CD4-positive, alpha-beta memory T cell (primary cell): ENCODE measurements at regions of chr20 and their contacts with region 1.

Region 1: GRCh38 chr20:1118336-1119127 is at the start of gene PSMF1:
- DNase-seq: peak; percentile 95 to 98 (median 96)
- H3K4me3 ChIP-seq: peak within 1 kb of the TSS; percentile 85 to 99
- H3K4me3 Mint-ChIP-seq: peak within 1 kb of the TSS; percentile 91 to 97 (median 95)
- H3K27ac ChIP-seq: peak within 1 kb of the TSS; percentile 78
- H3K27ac Mint-ChIP-seq: peak within 1 kb of the TSS; percentile 91 to 97 (median 95)
- H3K4me1 ChIP-seq: peaks cover 52% of the 10 kb centered on the region
- H3K4me1 Mint-ChIP-seq: peaks cover 47 to 70% (median 58%) of the 10 kb centered on the region in 4 donors
- H3K27me3 ChIP-seq: no peaks in the 10 kb centered on the region
- H3K27me3 Mint-ChIP-seq: no peaks in the 10 kb centered on the region
- total RNA-seq, gene PSMF1: 118 to 123 TPM

Region 2: GRCh38 chr20:1108437-1108920 is 10.1 kb before region 1 on chr20:
- CTCF ChIA-PET with region 1: interaction called, 17 read pairs
- POLR2A ChIA-PET with region 1: interaction called, 4 read pairs
- intact Hi-C with region 1: no loop called
- DNase-seq: peak; percentile 29 to 39 (median 35)
- H3K4me3 ChIP-seq: no peak overlapping the region
- H3K4me3 Mint-ChIP-seq: no peak overlapping the region
- H3K27ac ChIP-seq: no peak overlapping the region
- H3K27ac Mint-ChIP-seq: no peak overlapping the region
- H3K4me1 ChIP-seq: no peaks in the 10 kb centered on the region
- H3K4me1 Mint-ChIP-seq: peaks cover 0 to 11% (median 4%) of the 10 kb centered on the region in 4 donors
- H3K27me3 ChIP-seq: no peaks in the 10 kb centered on the region
- H3K27me3 Mint-ChIP-seq: peaks cover 0 to 1% of the 10 kb centered on the region in 2 donors

Region 3: GRCh38 chr20:1225783-1226654 is 107.5 kb after region 1 on chr20 and contains the start of gene RAD21L1:
- CTCF ChIA-PET with region 1: no interaction called
- POLR2A ChIA-PET with region 1: interaction called, 3 read pairs
- intact Hi-C with region 1: loop called (anchors 1 kb)
- DNase-seq: peak; percentile 52 to 81 (median 60)
- H3K4me3 ChIP-seq: peak within 1 kb of the TSS; percentile 44 to 59
- H3K4me3 Mint-ChIP-seq: peak within 1 kb of the TSS; percentile 82 to 91 (median 87)
- H3K27ac ChIP-seq: peak within 1 kb of the TSS; percentile 25
- H3K27ac Mint-ChIP-seq: peak within 1 kb of the TSS; percentile 68 to 91 (median 82)
- H3K4me1 ChIP-seq: peaks cover 17% of the 10 kb centered on the region
- H3K4me1 Mint-ChIP-seq: peaks cover 2 to 18% (median 10%) of the 10 kb centered on the region in 4 donors
- H3K27me3 ChIP-seq: peaks cover 10% of the 10 kb centered on the region
- H3K27me3 Mint-ChIP-seq: peaks cover 4 to 10% of the 10 kb centered on the region in 2 donors
- total RNA-seq, gene RAD21L1: 0.78 TPM in 1 of 2 experiments, not detected in the other

Region 4: DNA sequence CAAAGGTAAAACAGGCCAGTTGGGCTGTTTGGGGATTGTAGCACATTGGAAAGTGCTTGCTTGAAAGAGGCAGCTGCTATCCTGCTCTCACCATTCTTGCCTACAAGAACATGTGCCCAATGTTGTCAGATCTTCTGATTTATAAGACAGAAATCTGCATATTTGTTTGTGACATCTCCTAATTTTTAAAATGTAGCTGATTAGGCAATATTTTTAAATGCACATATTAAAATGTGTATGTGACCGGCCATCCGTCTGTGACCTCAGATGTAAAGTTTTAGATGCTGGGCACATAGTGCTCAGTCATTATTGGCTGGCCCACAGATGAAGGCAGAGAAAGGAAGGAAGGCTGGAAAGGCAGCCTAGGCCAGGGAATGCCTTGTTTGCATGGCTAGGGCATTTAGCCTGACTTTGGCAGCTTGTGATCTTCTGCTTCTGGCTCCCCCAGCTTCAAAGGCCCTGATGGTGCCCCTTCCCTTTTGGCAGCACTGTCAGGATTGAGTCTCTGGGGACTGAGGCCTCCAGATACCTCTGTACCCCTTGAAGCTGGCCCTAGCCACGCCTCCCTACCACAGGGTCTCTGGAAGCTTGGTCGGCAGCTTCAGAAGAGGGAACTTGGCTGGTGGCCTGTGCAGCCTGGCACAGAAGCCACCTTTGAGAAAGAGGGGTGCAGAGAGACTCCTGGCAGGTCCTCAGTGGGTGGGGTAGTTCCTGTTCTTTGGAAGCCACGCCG is 154.0 kb after region 1 on chr20:
- CTCF ChIA-PET with region 1: no interaction called
- POLR2A ChIA-PET with region 1: no interaction called
- intact Hi-C with region 1: no loop called
- DNase-seq: no peak
- H3K4me3 ChIP-seq: no peak overlapping the region
- H3K4me3 Mint-ChIP-seq: no peak overlapping the region
- H3K27ac ChIP-seq: no peak overlapping the region
- H3K27ac Mint-ChIP-seq: peak overlapping the region in 2 of 7 donors; percentile 1 to 13
- H3K4me1 ChIP-seq: peaks cover 4% of the 10 kb centered on the region
- H3K4me1 Mint-ChIP-seq: peaks cover 7 to 21% (median 18%) of the 10 kb centered on the region in 4 donors
- H3K27me3 ChIP-seq: no peaks in the 10 kb centered on the region
- H3K27me3 Mint-ChIP-seq: no peaks in the 10 kb centered on the region